HEK293T (cell line): ENCODE measurements at regions of chr2 and their contacts with region 1.

Region 1: DNA sequence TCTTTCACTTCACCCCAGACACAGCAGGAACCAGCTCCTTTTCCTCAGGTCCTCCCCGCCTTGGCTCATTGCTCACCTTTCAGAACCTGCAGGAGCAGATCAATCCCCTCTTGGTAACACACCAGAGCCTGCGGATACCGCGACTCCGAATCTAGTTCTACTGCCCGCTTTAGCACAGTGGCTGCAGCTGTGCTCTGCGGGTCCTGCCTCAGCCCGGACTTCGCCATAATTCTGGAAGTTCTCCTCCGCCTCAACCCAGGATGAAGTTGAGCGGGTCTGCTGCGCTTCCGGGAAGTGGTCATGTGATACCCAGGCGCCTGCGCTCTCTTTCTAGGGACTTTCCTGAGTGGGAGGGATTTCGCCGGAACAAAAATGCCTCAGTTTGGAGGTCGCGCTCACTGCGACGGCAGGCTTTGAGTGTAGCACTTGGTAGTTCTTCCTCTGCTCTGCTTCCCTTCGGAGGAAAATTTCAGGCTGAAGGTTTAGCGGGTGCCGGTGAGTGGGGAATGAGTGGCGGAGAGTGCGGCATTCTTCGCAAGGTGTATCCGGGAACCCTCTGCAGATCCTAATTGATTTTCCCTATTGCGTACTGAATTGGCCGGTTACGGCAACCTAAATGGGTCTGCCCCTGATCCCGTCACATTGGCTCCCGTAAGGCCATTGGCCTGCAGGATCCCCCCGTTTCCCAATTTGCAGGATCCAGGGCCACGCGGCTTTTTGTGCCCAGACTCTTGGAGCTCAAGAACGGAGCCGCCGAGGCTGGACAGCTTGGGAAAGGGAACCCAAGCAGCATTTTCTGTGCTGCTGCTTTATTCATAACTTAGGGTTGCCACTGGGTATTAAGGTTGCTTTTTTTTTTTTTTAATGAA is at the starts of genes MITD1 and MRPL30:
- DNase-seq: peak; percentile 84

Region 2: DNA sequence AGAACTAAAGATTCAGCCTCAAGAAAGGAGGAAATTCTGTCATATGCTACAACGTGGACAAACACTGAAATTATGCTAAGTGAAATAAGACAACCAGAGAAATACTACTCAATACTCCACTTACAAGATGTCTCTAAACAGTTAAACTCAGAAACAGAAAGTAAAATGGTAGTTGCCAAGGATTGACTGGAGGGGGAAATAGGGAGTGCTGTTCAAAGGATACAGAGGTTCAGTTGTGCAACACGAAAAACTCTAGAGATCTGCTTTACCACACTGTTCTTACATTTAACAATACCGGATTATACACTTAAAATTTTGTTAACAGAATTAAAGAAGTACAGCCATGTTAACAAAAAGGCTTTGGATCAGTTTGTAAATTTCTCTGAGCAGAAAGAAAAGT is 79.3 kb before region 1 on chr2:
- CTCF ChIA-PET with region 1: no interaction called
- POLR2A ChIA-PET with region 1: no interaction called
- DNase-seq: no peak

Region 3: DNA sequence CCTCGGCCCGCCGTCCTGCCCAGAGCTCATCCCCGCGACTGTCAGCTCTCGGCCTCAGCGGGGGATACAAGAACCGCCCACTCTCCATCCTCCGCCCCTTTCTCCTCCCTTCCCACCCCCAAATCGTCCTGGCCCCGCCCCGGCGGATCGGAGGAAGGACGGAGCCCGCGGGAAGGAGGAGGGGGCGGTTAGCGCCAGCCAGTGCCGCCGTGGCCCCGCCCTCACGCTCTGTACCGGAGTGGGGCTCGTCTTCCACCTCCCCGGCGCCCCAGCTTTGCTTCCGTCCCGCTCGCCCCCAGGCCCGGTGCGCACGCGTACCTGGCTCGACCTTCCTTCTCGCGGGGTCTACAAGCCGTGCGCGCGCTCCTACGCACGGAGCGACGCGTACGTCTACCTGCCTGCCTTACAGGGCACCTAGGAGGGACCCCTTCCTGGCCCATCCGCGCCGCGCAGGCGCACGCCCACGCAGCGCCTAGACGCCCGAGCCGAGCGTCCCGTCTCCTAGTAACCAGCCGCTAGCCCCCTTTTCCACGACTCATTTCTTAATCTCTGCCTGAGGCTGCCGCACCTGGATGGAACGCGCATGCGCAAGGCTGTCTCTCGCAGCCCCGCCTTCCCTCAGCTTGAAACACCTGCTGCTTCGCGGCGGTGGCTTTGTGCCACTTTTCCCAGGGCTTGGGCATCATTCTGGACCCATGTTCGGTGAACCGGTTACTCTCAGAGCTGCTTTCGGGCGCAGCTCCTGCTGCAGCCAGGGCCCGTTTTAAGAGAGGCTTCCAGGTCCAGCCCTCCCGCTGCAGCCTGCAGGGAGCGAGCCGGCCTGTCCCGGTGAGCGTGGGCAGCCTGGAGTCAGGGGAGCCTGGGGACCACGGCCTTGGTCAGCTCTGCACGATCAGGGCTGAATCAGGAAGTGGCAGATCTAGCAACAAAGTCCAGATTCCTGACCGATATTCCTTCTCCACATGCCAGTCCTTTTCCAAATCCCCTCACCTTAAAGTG is 39.6 kb before region 1 on chr2 and contains the start of gene C2orf15:
- CTCF ChIA-PET with region 1: no interaction called
- POLR2A ChIA-PET with region 1: interaction called, 25 read pairs
- DNase-seq: peak; percentile 90